Mammary epithelial cell (primary cell): ENCODE measurements at regions of chr17 and their contacts with region 1.

Region 1: DNA sequence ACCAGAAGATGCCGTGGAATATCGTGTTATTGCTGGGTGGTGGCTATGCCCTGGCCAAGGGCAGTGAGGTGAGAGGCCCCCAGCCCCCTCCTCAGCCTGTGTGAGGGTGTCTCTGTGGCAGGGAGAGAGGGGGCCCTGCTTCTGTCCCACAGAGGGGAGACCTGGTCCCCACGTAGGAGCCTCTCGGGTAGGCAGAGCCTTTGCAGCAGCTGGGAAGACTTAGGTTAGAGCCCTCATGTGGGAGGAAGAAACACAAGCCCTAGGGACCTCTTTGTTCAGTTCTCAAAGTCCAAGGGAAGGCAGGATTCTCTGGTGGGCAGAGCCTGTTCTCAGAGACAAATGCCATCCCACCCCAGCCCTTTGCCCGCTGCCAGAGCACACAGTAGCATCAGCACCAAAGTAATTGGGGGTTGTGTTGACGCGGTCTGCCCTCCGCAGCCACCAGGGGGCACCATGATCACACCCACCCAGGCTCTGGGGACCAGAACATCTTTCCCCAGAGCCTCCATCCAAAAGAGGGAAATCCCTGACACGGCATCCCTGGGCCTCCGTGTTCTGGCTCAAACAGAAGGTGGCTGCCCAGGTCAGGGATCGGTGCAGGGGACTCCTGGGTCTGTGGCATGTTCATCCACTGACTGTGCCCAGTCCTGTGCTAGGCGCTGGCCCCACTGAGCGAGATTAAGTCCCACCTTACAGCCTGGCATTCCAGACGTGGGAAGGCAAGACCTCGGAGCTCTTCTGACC is 11.5 kb upstream of the FOXN1 start:
- DNase-seq: peak; percentile 57
- H3K4me3 ChIP-seq: no peak overlapping the region
- H3K27ac ChIP-seq: no peak overlapping the region
- H3K4me1 ChIP-seq: peaks cover 10% of the 10 kb centered on the region
- H3K27me3 ChIP-seq: no peaks in the 10 kb centered on the region
- CTCF ChIP-seq: peak; percentile 81 to 96

Region 2: GRCh38 chr17:28227316-28228125 is 267.1 kb before region 1 on chr17:
- CTCF ChIA-PET with region 1: no interaction called
- dilution Hi-C with region 1: no loop called
- in situ Hi-C with region 1: loop called in 1 of 2 experiments (anchors 10 kb)
- intact Hi-C with region 1: no loop called
- DNase-seq: peak; percentile 73
- H3K4me3 ChIP-seq: peak overlapping the region; percentile 38 to 53 (median 49)
- H3K27ac ChIP-seq: no peak overlapping the region
- H3K4me1 ChIP-seq: peaks cover 16% of the 10 kb centered on the region
- H3K27me3 ChIP-seq: no peaks in the 10 kb centered on the region
- CTCF ChIP-seq: peak in 1 of 2 donors; percentile 16

Region 3: GRCh38 chr17:28335201-28335955 is 159.2 kb before region 1 on chr17 and contains the starts of genes IFT20 and TNFAIP1:
- CTCF ChIA-PET with region 1: no interaction called
- dilution Hi-C with region 1: no loop called
- in situ Hi-C with region 1: loop called in 1 of 2 experiments (anchors 25 kb)
- intact Hi-C with region 1: loop called (anchors 1 kb)
- DNase-seq: peak; percentile 100
- H3K4me3 ChIP-seq: peak within 1 kb of the TSS; percentile 77 to 91 (median 89)
- H3K27ac ChIP-seq: peak within 1 kb of the TSS; percentile 98
- H3K4me1 ChIP-seq: peaks cover 42% of the 10 kb centered on the region
- H3K27me3 ChIP-seq: no peaks in the 10 kb centered on the region
- CTCF ChIP-seq: no peak
- total RNA-seq, gene IFT20: 22.0 to 26.1 TPM
- total RNA-seq, gene TNFAIP1: 103 to 108 TPM

Region 4: DNA sequence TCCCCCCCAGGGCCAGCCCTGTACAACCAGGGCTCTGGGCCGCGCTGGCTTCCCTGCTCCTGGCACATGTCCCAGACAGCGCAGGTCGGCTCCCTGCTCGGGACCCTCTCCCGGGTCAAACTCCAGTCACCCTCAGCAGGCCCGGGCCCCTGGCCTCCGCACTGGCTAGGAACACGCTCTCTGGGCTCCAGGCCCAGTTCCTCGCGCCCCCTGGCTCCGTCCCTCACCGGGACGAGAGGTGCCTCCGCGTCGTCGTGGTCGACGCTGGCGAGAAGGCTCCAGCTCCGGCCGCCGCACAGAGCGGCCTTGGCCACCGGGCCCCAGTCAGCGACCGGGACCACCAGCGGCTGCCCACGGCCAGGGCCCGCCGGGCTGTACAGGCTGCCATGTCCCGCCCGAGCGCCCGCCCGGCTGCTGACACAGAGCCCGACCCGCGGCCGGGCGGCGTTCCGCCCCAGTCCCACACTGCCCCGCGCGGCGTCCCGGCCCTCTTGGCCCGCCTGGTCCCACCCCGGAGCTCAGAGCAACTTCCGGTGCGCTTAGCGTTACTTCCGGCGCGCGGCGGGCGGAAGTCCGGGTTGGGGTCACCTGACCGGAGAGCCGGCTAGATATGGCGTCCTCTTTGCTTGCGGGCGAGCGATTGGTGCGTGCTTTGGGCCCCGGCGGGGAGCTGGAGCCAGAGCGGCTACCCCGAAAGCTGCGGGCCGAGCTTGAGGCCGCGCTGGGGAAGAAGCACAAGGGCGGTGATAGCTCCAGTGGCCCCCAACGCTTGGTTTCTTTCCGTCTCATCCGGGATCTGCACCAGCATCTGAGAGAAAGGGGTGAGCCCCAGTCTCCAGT is 137.3 kb before region 1 on chr17 and contains the start of gene POLDIP2:
- CTCF ChIA-PET with region 1: no interaction called
- dilution Hi-C with region 1: no loop called
- in situ Hi-C with region 1: no loop called
- intact Hi-C with region 1: loop called (anchors 1 kb)
- DNase-seq: peak; percentile 94
- H3K4me3 ChIP-seq: peak within 1 kb of the TSS; percentile 88 to 99 (median 99)
- H3K27ac ChIP-seq: peak within 1 kb of the TSS; percentile 85
- H3K4me1 ChIP-seq: peaks cover 16% of the 10 kb centered on the region
- H3K27me3 ChIP-seq: no peaks in the 10 kb centered on the region
- CTCF ChIP-seq: no peak
- total RNA-seq, gene POLDIP2: 76.3 to 80.5 TPM

Region 5: DNA sequence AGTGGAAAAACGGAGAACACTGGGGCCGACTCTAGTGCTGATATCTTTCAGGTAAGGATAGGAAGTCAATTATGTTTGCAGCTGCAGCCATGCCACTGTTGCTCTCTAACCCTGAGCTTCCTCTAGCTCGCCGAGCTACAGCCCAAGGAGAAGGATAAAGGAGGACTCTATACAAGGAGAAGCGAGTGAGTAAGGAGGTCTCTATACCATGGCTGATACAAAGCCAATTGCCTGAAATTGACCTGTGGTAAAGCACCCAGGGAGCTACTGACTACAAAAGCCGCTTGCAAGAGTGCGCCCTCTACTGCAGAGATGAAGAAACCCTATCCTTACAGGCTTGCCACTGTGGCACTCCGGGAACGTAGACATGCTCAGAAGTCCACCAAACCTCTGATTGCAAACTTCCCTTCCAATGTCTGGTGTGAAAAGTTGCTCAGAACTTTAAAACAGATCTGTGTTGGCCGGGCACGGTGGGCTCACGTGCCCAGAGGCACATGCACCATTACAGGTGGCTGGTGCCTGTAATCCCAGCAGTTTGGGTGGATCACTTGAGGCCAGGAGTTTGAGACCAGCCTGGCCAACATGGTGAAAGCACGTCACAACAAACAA is 77.8 kb before region 1 on chr17:
- CTCF ChIA-PET with region 1: no interaction called
- dilution Hi-C with region 1: no loop called
- in situ Hi-C with region 1: no loop called
- intact Hi-C with region 1: loop called (anchors 1 kb)
- DNase-seq: peak; percentile 56
- H3K4me3 ChIP-seq: no peak overlapping the region
- H3K27ac ChIP-seq: no peak overlapping the region
- H3K4me1 ChIP-seq: peaks cover 4% of the 10 kb centered on the region
- H3K27me3 ChIP-seq: no peaks in the 10 kb centered on the region
- CTCF ChIP-seq: peak; percentile 86 to 91

Region 6: GRCh38 chr17:28612936-28613872 is 118.6 kb after region 1 on chr17:
- CTCF ChIA-PET with region 1: no interaction called
- dilution Hi-C with region 1: no loop called
- in situ Hi-C with region 1: no loop called
- intact Hi-C with region 1: loop called (anchors 1 kb)
- DNase-seq: peak; percentile 2
- H3K4me3 ChIP-seq: no peak overlapping the region
- H3K27ac ChIP-seq: no peak overlapping the region
- H3K4me1 ChIP-seq: no peaks in the 10 kb centered on the region
- H3K27me3 ChIP-seq: no peaks in the 10 kb centered on the region
- CTCF ChIP-seq: peak; percentile 52 to 65